ENCODE measurements at regions of chr1 and their contacts with region 1.

Region 1: DNA sequence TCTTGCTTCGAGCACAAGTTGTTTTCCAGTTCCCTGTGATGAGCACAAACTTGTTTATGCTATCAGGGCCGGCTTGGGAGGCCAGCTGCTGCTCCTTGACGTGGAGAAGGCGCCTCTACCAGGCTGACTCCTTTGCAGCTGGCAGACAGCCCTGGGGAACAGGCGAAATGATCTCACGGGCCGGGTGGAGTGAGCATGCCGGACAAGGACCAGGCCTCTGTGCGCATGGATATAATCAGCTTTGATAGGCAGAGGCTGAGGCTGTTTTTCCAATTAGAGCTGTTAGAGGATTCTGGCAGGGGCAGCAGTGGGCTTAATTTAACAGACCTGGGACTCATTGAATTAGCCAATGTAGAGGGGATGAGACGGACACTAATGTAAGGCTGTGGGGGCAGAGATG is 38.9 kb downstream of the FAM163A start:
- DNase-seq: no peak
- H3K4me3 ChIP-seq: no peak overlapping the region
- H3K27ac ChIP-seq: no peak overlapping the region
- H3K4me1 ChIP-seq: no peaks in the 10 kb centered on the region
- H3K27me3 ChIP-seq: no peaks in the 10 kb centered on the region
- CTCF ChIP-seq: no peak
- POLR2A ChIP-seq: no peak

Region 2: DNA sequence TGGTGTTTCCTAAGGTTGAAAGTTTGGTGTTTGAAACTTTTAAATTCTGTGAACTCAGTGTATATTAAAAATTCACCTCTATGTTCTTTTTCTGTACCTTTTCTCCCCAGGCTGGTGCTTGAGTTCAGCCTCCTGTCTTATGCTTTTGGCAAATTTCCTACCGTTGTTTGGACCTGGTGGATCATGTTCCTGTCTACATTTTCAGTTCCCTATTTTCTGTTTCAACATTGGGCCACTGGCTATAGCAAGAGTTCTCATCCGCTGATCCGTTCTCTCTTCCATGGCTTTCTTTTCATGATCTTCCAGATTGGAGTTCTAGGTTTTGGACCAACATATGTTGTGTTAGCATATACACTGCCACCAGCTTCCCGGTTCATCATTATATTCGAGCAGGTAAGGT is 441.0 kb before region 1 on chr1:
- intact Hi-C with region 1: no loop called
- DNase-seq: no peak
- H3K4me3 ChIP-seq: no peak overlapping the region
- H3K27ac ChIP-seq: no peak overlapping the region
- H3K4me1 ChIP-seq: no peaks in the 10 kb centered on the region
- H3K27me3 ChIP-seq: no peaks in the 10 kb centered on the region
- CTCF ChIP-seq: no peak
- POLR2A ChIP-seq: no peak

Region 3: GRCh38 chr1:179441501-179441900 is 340.5 kb before region 1 on chr1:
- intact Hi-C with region 1: no loop called
- DNase-seq: no peak
- H3K4me3 ChIP-seq: no peak overlapping the region
- H3K27ac ChIP-seq: no peak overlapping the region
- H3K4me1 ChIP-seq: no peaks in the 10 kb centered on the region
- H3K27me3 ChIP-seq: no peaks in the 10 kb centered on the region
- CTCF ChIP-seq: no peak
- POLR2A ChIP-seq: no peak

Region 4: DNA sequence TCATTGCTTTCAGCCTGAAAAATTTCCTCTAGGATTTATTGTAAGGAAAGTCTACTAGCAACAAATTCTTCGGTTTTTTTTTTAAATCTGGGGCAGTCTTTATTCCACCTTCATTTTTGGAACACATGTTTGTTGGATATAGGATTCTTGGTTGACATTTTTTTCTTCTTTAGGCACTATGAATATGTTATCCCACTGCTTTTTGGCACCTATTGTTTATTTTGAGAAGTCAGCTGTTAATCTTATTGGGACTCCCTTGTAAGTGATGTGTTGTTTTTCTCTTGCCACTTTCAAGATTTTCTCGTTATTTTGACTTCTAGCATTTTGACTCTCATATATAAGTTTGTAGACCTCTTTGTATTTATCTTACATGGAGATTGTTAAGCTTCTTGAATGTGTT is 305.5 kb before region 1 on chr1:
- intact Hi-C with region 1: loop called (anchors 5 kb)
- DNase-seq: no peak
- H3K4me3 ChIP-seq: no peak overlapping the region
- H3K27ac ChIP-seq: no peak overlapping the region
- H3K4me1 ChIP-seq: no peaks in the 10 kb centered on the region
- H3K27me3 ChIP-seq: no peaks in the 10 kb centered on the region
- CTCF ChIP-seq: no peak
- POLR2A ChIP-seq: no peak

Region 5: DNA sequence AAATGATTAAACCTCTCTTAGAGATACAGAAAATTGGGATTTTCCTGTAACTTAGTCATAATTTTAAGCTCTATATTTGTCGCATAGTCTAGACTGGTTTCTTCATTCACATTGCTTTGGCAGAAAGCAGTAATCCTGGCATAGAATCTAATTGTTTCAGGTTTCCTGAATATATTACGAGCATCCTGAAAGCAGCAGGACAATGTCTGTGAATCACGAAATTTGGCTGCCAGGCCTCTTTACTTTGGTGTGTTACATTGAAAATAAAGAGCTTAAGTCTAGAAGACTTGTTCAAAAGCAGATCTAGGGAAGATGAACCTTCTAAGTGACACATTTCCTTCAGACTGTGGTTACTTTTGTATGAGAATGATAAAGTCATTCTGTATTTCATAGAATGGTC is 118.2 kb before region 1 on chr1:
- intact Hi-C with region 1: no loop called
- DNase-seq: no peak
- H3K4me3 ChIP-seq: no peak overlapping the region
- H3K27ac ChIP-seq: no peak overlapping the region
- H3K4me1 ChIP-seq: no peaks in the 10 kb centered on the region
- H3K27me3 ChIP-seq: no peaks in the 10 kb centered on the region
- CTCF ChIP-seq: no peak
- POLR2A ChIP-seq: no peak